Endothelial cell of umbilical vein (primary cell): ENCODE measurements at regions of chr2 and their contacts with region 1.

Region 1: DNA sequence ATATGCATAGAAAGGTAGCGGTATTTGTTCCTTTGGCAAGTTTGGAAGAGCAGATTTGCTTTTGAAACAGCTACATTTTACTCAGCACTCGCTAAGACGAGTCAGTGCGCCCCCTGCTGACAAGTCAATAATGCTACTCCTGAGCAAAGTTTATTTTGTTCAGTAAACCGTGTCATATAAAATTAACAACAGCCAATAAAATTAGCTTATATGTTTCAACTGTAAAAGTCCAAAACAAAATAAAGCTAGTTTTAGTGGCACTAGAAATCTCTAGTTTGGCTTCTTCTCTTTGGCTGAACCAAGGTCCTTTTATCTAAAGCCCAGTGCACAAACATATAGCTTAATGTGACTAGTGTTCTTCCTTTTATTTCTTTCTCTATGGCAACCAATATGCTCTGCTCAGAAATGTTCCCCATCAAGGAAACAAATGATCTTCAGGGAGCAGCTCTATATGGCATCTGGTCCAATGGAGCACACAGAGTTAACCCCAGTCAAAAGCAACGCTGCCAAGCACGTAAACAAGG is 4.2 kb upstream of the POU3F3 start:
- DNase-seq: peak; percentile 34
- H3K4me3 ChIP-seq: no peak overlapping the region
- H3K27ac ChIP-seq: no peak overlapping the region
- H3K4me1 ChIP-seq: no peaks in the 10 kb centered on the region
- H3K27me3 ChIP-seq: peaks cover 81 to 94% of the 10 kb centered on the region in 2 experiments
- CTCF ChIP-seq: peak; percentile 58 to 63
- POLR2A ChIP-seq: no peak

Region 2: GRCh38 chr2:103161456-103162289 is 1688.0 kb before region 1 on chr2:
- CTCF ChIA-PET with region 1: interaction called, 67 read pairs
- POLR2A ChIA-PET with region 1: no interaction called
- dilution Hi-C with region 1: no loop called
- intact Hi-C with region 1: no loop called
- DNase-seq: peak; percentile 28
- H3K4me3 ChIP-seq: no peak overlapping the region
- H3K27ac ChIP-seq: no peak overlapping the region
- H3K4me1 ChIP-seq: no peaks in the 10 kb centered on the region
- H3K27me3 ChIP-seq: no peaks in the 10 kb centered on the region
- CTCF ChIP-seq: peak; percentile 47 to 50
- POLR2A ChIP-seq: no peak

Region 3: GRCh38 chr2:104862058-104862941 is 12.6 kb after region 1 on chr2:
- CTCF ChIA-PET with region 1: interaction called, 32 read pairs
- POLR2A ChIA-PET with region 1: no interaction called
- dilution Hi-C with region 1: no loop called
- intact Hi-C with region 1: no loop called
- DNase-seq: no peak
- H3K4me3 ChIP-seq: no peak overlapping the region
- H3K27ac ChIP-seq: no peak overlapping the region
- H3K4me1 ChIP-seq: peaks cover 1% of the 10 kb centered on the region
- H3K27me3 ChIP-seq: peaks cover 83 to 97% of the 10 kb centered on the region in 2 experiments
- CTCF ChIP-seq: no peak
- POLR2A ChIP-seq: no peak

Region 4: DNA sequence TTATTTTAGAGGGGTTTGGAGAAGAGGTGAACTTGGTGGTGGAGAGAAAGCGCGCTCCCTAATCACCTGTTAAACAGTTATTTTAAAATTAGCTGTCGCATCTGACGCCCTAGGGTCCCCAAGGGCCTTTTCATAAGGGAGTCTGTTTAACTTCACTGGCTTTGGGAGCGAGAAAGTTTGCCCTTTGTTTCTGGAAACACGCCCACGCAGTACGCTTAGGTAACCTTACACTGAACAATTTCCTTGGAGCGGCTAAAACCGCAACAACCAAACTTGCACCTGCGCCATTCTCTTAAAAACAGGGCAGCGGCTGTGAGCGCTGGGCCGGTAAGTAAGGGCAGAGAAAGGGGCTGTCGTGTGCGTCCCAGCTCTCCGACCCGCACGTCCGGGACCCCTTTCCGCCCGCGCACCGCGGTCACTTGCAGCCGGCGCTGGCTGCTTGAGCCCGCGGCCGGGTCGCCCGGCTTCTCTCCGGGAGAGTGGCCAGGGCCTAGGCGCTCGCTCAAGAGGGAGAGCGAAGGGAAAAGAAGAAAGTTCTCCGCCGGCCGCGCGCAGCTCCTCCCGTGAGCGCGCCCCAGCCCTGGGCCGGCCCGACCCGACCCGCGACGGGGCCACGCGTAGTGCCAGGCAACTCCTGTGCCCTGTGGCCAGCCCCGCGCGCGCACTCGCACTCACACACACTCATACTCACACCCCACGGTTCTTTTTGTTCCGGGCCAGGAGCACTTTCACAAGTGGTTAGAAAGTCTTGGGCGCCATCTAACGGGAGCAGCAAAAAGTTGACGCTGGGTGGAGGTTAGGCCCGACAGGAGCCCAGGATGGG is 23.4 kb after region 1 on chr2:
- CTCF ChIA-PET with region 1: interaction called, 19 read pairs
- POLR2A ChIA-PET with region 1: no interaction called
- dilution Hi-C with region 1: no loop called
- intact Hi-C with region 1: no loop called
- DNase-seq: peak; percentile 49
- H3K4me3 ChIP-seq: peak overlapping the region in 1 of 3 experiments; percentile 32
- H3K27ac ChIP-seq: no peak overlapping the region
- H3K4me1 ChIP-seq: no peaks in the 10 kb centered on the region
- H3K27me3 ChIP-seq: peaks cover 42 to 53% of the 10 kb centered on the region in 2 experiments
- CTCF ChIP-seq: peak; percentile 40 to 59
- POLR2A ChIP-seq: no peak

Region 5: DNA sequence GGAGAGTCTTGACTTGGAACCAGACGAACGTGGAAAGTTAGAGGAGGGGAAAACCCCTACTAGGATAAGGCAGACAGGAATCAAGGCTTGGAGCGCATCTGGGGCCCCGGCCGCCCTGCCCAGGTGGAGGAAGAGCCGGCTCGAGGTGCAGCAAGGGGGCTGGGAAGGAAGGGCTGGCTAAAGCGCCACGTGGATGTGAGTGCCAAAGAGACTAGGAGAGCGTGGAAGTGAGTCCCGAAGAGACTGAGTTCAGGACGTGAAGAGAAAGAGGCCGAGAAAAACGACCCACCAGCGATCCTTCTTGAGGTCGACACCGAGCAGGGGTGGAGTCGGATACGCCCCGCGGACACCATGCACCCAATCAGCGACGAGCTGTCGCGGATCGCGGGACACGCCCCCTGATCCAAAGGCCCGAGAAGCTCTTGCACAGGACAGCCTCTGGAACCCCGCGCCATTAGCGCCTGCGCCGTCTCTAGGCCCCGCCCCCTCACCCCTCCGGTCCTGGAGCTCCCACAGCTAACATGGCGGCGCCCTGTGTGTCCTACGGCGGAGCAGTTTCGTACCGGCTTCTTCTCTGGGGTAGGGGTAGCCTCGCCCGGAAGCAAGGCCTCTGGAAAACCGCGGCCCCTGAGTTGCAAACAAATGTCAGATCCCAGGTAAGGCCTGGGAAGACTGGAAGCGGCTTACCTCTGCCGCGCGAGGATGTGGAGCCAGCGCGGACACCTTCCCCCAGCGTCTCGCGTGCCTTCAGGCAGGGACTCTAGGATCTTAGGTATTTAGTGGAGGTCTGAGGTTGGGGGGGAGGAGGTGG is 188.1 kb after region 1 on chr2 and contains the start of gene MRPS9:
- CTCF ChIA-PET with region 1: interaction called, 10 read pairs
- POLR2A ChIA-PET with region 1: no interaction called
- dilution Hi-C with region 1: no loop called
- intact Hi-C with region 1: no loop called
- DNase-seq: peak; percentile 99
- H3K4me3 ChIP-seq: peak within 1 kb of the TSS; percentile 68 to 90 (median 74)
- H3K27ac ChIP-seq: peak within 1 kb of the TSS; percentile 48
- H3K4me1 ChIP-seq: peaks cover 10% of the 10 kb centered on the region
- H3K27me3 ChIP-seq: no peaks in the 10 kb centered on the region
- CTCF ChIP-seq: no peak
- POLR2A ChIP-seq: peak; percentile 96
- total RNA-seq, gene MRPS9: 21.8 and 23.9 TPM in 2 replicates